CD4-positive, alpha-beta T cell (primary cell): ENCODE measurements at regions of chr6 and their contacts with region 1.

Region 1: GRCh38 chr6:85669735-85670194 is 27.1 kb upstream of the SYNCRIP start:
- DNase-seq: peak; percentile 7 to 83 (median 33)
- ATAC-seq: peak; percentile 94
- H3K4me3 ChIP-seq: no peak overlapping the region
- H3K4me3 Mint-ChIP-seq: peak overlapping the region; percentile 28
- H3K27ac ChIP-seq: peak overlapping the region; percentile 50 to 69
- H3K27ac Mint-ChIP-seq: peak overlapping the region; percentile 89
- H3K4me1 ChIP-seq: peaks cover 22% of the 10 kb centered on the region
- H3K4me1 Mint-ChIP-seq: peaks cover 57% of the 10 kb centered on the region
- H3K27me3 ChIP-seq: no peaks in the 10 kb centered on the region
- H3K27me3 Mint-ChIP-seq: no peaks in the 10 kb centered on the region
- CTCF ChIP-seq: no peak

Region 2: DNA sequence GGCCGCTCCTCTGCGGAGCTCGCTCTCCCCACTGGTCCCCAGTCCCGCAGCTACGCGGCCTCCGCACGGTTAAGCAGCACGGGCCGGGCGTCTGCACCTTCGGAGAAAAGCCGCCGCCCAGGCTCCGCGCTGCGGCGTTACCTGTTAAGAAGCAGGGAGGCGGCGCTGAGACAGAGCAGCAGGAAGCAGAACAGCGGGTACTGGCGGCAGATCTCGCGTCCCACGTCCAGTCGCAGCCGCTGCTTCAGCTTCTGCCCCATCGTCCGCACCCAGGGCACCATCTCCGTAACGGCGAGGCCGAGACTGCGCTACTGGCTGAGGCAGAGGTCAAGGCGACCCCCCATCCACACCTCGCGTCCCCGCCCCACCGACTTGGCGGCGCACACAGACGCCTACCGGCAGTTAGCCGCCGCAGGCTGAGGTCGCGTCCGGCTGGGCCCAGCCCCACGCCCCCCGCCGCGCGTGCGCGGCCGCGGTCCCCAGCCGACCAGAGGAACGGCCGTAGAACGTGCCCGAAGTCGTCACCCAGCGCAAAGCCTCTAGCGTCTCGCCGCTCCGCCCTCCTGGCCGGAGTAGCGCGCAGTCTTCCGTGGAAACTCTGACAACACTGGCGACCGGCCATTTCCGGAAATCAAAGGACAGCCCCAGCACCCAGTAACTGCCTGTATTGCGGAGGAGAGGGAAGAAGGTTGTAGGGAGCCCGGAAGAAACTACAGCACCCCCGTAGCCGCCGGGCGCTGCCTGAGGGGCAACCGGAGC is 76.1 kb before region 1 on chr6 and contains the start of gene SNX14:
- CTCF ChIA-PET with region 1: interaction called, 4 read pairs
- POLR2A ChIA-PET with region 1: interaction called, 10 read pairs
- intact Hi-C with region 1: no loop called
- DNase-seq: peak; percentile 56 to 89 (median 66)
- ATAC-seq: peak; percentile 72
- H3K4me3 ChIP-seq: peak within 1 kb of the TSS; percentile 86
- H3K4me3 Mint-ChIP-seq: peak within 1 kb of the TSS; percentile 95
- H3K27ac ChIP-seq: peak within 1 kb of the TSS; percentile 92 to 93
- H3K27ac Mint-ChIP-seq: peak within 1 kb of the TSS; percentile 85
- H3K4me1 ChIP-seq: peaks cover 25% of the 10 kb centered on the region
- H3K4me1 Mint-ChIP-seq: peaks cover 58% of the 10 kb centered on the region
- H3K27me3 ChIP-seq: no peaks in the 10 kb centered on the region
- H3K27me3 Mint-ChIP-seq: no peaks in the 10 kb centered on the region
- CTCF ChIP-seq: no peak
- total RNA-seq, gene SNX14: 30.8 to 31.5 TPM